ENCODE measurements at regions of chr3 and their contacts with region 1.

Region 1: GRCh38 chr3:63193629-63194028 is 84.5 kb upstream of the SYNPR start:
- DNase-seq: no peak

Region 2: GRCh38 chr3:62665598-62666437 is 527.8 kb before region 1 on chr3:
- intact Hi-C with region 1: loop called (anchors 2 kb)
- DNase-seq: no peak

Region 3: DNA sequence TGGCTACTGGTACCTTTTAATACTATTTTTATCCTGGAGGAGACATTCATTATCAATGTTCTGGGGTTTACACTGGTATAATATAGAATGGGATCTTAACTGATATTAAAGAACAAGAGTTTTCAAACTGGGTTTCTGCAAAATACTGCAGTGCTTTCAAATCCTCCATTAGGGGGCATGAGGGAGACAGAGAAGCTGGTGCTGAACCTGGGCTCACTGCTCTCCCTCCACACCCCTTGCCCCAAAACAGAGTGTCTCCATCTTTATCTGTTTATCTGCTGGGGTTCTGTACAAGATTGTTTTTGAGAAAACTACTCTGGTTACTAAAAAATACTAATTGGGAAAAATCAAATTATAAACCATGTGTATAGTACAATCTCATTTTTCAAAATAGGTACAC is 360.1 kb before region 1 on chr3:
- intact Hi-C with region 1: loop called (anchors 5 kb)
- DNase-seq: no peak

Region 4: DNA sequence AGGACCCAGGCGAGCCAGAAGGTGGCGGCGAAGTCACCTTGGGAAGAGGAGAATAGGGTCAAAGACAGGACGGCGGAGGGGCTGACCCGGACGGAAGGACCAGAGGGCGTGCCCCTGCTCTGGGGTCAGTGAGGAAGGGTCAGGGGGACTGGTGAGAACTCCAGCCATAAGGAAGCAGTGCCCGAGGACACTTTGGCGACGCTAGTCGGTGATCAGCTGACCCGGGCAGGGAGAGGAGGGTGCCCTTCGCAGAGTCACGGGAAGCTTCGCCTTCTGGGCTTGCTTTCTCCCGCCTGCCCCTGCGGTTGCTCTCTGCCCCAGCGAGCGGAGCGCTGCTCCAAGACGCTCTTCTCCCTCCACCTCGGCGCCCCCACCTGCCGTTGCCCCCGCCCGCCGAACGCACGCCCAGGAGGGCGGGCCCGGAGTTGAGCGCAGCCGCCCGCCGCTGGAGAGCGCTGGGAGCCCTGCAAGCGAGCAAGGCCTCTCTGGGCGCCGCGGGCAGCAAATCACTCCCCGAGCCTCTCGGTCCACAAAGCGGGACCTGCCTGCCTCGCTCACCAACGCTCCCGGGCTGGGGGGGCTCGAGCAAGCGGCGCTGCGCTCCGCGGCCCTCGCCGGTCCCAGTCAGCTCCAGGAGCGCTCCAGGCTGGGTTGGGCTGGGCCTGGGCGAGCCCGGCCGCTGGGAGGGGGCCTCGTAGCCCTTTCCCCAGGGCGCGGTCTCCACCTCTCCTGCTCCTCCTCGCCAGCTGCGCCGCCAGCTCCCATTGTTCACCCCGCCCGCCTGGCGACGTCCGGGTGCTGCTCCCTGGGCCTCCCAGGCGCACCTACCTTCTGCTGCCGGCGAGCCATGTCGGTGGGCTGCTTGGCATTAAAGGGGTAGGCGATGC is 319.6 kb before region 1 on chr3:
- intact Hi-C with region 1: loop called (anchors 2 kb)
- DNase-seq: peak; percentile 83

Measured in cardiac septum (tissue), 1 donor.